Naive thymus-derived CD4-positive, alpha-beta T cell (primary cell): ENCODE measurements at regions of chr3 and their contacts with region 1.

Region 1: GRCh38 chr3:127672516-127673190 is at the start of gene ABTB1:
- DNase-seq: peak; percentile 73 to 88 (median 83)
- ATAC-seq: peak; percentile 93
- H3K4me3 ChIP-seq: peak within 1 kb of the TSS; percentile 86
- H3K4me3 Mint-ChIP-seq: peak within 1 kb of the TSS; percentile 88 to 96 (median 94)
- H3K27ac ChIP-seq: peak within 1 kb of the TSS; percentile 98
- H3K27ac Mint-ChIP-seq: peak within 1 kb of the TSS; percentile 92 to 98 (median 97)
- H3K4me1 ChIP-seq: peaks cover 13 to 17% of the 10 kb centered on the region in 2 donors
- H3K4me1 Mint-ChIP-seq: peaks cover 17 to 37% (median 33%) of the 10 kb centered on the region in 7 donors
- H3K27me3 ChIP-seq: no peaks in the 10 kb centered on the region
- H3K27me3 Mint-ChIP-seq: no peaks in the 10 kb centered on the region
- total RNA-seq, gene ABTB1: 26.7 to 182 (median 124) TPM

Region 2: DNA sequence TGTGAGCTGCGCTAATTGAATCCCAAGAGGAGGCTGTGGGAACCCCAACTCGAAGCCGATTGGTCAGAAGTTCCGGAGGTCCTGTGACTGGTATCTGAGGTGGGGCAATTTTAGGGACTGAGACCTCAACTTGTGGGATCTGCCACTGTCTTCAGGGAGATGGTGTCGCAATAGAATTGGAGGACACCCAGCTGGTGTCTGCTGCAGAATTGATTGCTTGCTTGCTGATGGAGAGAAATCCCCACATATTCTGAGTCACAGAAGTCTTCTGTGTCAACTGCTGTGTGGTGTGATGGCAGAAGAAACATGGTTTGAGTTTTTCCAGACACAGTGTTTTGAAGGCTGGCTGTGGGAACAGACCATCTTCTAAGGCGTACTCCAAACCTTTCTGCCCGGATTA is 789.4 kb before region 1 on chr3:
- CTCF ChIA-PET with region 1: no interaction called
- POLR2A ChIA-PET with region 1: no interaction called
- intact Hi-C with region 1: no loop called
- DNase-seq: no peak
- ATAC-seq: no peak
- H3K4me3 ChIP-seq: no peak overlapping the region
- H3K4me3 Mint-ChIP-seq: no peak overlapping the region
- H3K27ac ChIP-seq: no peak overlapping the region
- H3K27ac Mint-ChIP-seq: no peak overlapping the region
- H3K4me1 ChIP-seq: no peaks in the 10 kb centered on the region
- H3K4me1 Mint-ChIP-seq: peaks cover 0 to 1% (median 0%) of the 10 kb centered on the region in 7 donors
- H3K27me3 ChIP-seq: no peaks in the 10 kb centered on the region
- H3K27me3 Mint-ChIP-seq: no peaks in the 10 kb centered on the region

Region 3: DNA sequence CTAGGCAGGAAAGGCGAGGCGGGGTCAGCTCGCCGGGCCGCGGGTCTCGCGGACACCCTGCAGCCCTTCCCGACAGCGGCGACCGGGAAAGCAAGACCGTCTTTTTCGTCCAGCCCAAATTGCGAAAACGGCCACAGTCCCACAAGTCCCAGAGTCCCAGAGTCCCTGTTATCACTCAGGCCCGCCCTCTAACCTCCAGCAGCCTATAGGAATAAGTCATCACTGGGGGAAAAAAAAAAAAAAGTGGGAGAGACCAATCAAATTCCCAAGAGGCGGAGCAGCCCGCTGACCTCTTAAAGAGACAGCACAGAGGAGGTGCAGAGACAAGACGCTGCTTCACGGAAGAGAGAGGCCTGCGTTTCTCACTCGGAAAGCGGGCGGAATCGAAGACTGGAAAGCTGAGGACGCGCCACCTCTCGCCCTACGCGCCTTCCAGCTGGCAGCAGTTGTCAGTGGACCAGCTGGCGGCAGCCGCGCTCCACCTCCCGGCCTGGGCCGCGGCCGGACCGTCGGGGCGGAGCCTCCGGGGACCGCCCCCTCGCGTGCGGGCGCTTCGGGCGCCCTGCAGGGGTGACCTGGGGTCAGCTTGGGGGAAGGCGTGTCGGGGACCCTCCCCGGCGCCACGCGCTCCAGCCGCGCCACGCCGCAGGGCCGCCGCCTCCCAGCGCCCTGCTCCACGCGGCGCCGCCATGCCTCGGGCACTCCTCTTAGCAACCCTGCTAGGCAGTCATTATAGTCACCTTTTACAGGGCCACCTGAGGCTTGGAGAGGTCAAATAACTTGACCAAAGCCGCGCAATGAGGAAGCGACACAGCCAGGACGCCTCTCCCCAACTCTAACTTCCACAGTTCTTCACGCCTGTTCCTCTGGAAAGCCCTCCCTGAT is 81.8 kb before region 1 on chr3 and contains the start of gene TPRA1:
- CTCF ChIA-PET with region 1: interaction called, 3 read pairs
- POLR2A ChIA-PET with region 1: interaction called, 13 read pairs
- intact Hi-C with region 1: loop called (anchors 1 to 2 kb)
- DNase-seq: peak; percentile 58 to 90 (median 85)
- ATAC-seq: peak; percentile 90
- H3K4me3 ChIP-seq: peak within 1 kb of the TSS; percentile 91
- H3K4me3 Mint-ChIP-seq: peak within 1 kb of the TSS; percentile 86 to 99 (median 96)
- H3K27ac ChIP-seq: peak within 1 kb of the TSS; percentile 80
- H3K27ac Mint-ChIP-seq: peak within 1 kb of the TSS; percentile 86 to 96 (median 94)
- H3K4me1 ChIP-seq: peaks cover 11 to 12% of the 10 kb centered on the region in 2 donors
- H3K4me1 Mint-ChIP-seq: peaks cover 14 to 51% (median 43%) of the 10 kb centered on the region in 7 donors
- H3K27me3 ChIP-seq: no peaks in the 10 kb centered on the region
- H3K27me3 Mint-ChIP-seq: no peaks in the 10 kb centered on the region
- total RNA-seq, gene TPRA1: 13.6 to 30.6 (median 24.5) TPM

Region 4: DNA sequence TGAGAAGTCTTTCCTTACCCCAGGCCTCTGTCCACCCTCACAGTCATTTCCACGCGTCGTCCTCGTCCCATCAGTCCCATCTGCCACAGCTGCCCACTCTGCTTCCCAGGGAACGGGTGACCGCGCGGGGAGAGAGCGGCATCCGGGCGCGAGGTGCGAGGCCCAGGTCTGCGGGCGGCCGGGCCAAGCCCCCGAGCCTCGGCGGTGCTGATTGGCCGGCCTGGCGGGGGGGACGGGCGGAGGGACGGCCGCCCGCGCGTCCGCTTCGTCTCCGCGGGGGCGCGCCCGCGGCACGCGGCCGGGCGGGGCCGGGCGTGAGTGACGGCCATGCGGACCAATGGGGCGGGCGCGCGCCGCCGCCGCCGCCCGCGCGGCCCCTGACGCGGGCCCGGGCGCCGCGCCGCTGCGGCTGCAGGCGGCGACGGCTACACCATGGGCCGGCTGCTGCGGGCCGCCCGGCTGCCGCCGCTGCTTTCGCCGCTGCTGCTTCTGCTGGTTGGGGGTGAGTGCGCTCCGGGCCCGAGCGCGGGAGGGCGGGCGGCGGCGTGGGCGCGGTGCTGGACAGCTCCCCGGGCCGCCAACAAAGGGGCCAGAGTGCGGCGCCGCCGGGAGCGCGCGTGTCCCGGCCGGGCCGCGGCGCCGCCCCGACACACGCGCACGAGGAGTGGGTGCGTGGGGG is 43.7 kb before region 1 on chr3 and contains the start of gene PODXL2:
- CTCF ChIA-PET with region 1: interaction called, 3 read pairs
- POLR2A ChIA-PET with region 1: interaction called, 3 read pairs
- intact Hi-C with region 1: loop called (anchors 2 kb)
- DNase-seq: peak in 8 of 9 donors; percentile 8 to 64 (median 27)
- ATAC-seq: peak; percentile 63
- H3K4me3 ChIP-seq: peak within 1 kb of the TSS; percentile 62
- H3K4me3 Mint-ChIP-seq: peak within 1 kb of the TSS; percentile 86 to 99 (median 90)
- H3K27ac ChIP-seq: no peak within 1 kb of the TSS
- H3K27ac Mint-ChIP-seq: peak within 1 kb of the TSS; percentile 36 to 86 (median 72)
- H3K4me1 ChIP-seq: peaks cover 10 to 15% of the 10 kb centered on the region in 2 donors
- H3K4me1 Mint-ChIP-seq: peaks cover 11 to 37% (median 27%) of the 10 kb centered on the region in 7 donors
- H3K27me3 ChIP-seq: peaks cover 0 to 3% of the 10 kb centered on the region in 2 donors
- H3K27me3 Mint-ChIP-seq: peaks cover 12 to 63% (median 32%) of the 10 kb centered on the region in 5 donors
- total RNA-seq, gene PODXL2: 2.2 to 5.5 (median 3.6) TPM

Region 5: GRCh38 chr3:127697551-127698240 is 25.0 kb after region 1 on chr3:
- CTCF ChIA-PET with region 1: no interaction called
- POLR2A ChIA-PET with region 1: interaction called, 6 read pairs
- intact Hi-C with region 1: loop called (anchors 1 to 2 kb)
- DNase-seq: peak in 8 of 9 donors; percentile 27 to 59 (median 48)
- ATAC-seq: peak; percentile 76
- H3K4me3 ChIP-seq: no peak overlapping the region
- H3K4me3 Mint-ChIP-seq: peak overlapping the region in 2 of 10 donors; percentile 31 to 52
- H3K27ac ChIP-seq: no peak overlapping the region
- H3K27ac Mint-ChIP-seq: peak overlapping the region in 1 of 9 donors; percentile 77
- H3K4me1 ChIP-seq: no peaks in the 10 kb centered on the region
- H3K4me1 Mint-ChIP-seq: peaks cover 0 to 5% (median 4%) of the 10 kb centered on the region in 7 donors
- H3K27me3 ChIP-seq: no peaks in the 10 kb centered on the region
- H3K27me3 Mint-ChIP-seq: peaks cover 0 to 5% (median 0%) of the 10 kb centered on the region in 5 donors

Region 6: DNA sequence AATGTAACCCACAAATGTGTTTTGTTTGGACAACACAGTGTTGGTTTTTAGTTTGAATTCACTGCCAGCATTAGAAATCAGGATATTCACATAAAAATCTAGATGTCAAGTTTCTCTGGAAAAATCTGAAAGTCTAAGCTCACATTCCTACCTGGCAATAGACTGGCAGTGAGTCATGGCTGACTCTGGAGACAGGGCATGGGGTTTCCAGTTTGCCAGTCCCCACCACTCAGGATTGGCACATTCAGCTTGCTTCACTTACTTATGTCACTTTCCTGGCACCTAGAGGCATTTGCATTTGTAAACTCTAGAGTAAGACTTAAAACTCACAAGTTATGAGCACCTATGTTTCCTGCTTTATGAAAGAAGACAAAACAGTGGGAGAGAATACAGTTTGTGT is 360.4 kb after region 1 on chr3:
- CTCF ChIA-PET with region 1: no interaction called
- POLR2A ChIA-PET with region 1: no interaction called
- intact Hi-C with region 1: no loop called
- DNase-seq: no peak
- ATAC-seq: no peak
- H3K4me3 ChIP-seq: no peak overlapping the region
- H3K4me3 Mint-ChIP-seq: no peak overlapping the region
- H3K27ac ChIP-seq: no peak overlapping the region
- H3K27ac Mint-ChIP-seq: no peak overlapping the region
- H3K4me1 ChIP-seq: no peaks in the 10 kb centered on the region
- H3K4me1 Mint-ChIP-seq: no peaks in the 10 kb centered on the region
- H3K27me3 ChIP-seq: no peaks in the 10 kb centered on the region
- H3K27me3 Mint-ChIP-seq: peaks cover 6 to 29% (median 17%) of the 10 kb centered on the region in 5 donors